Psoas muscle (tissue), 8 donors: ENCODE measurements at regions of chr1 and their contacts with region 1.

Region 1: DNA sequence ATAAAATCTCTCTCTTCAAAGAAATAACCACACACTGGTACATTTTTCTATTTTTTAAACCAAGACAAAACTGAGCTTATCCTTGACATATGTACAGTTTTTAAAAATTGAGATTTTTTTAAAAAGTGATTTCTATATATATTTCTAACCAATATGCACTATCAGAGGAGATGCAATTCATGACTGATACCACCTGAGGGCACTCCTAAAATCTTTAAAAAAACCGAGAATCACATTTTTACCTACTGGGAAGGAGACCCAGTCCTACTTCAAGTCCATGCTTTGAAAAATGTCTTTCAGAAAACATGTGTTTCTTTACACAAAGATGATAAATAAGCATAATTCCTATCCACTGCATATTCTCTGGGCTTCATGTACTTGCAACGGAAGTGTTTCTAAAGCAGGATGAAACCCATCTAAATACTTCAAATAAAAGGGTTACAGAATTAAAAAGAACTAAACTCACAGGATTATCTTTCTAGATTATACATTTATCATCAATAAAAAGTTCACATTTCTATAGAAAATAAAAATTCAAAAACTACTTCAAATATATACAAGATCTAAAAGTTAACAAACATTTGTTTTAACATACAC is 98.6 kb downstream of the ENAH start:
- DNase-seq: no peak
- ATAC-seq: peak in 2 of 4 donors; percentile 55 to 67
- H3K4me3 ChIP-seq: no peak overlapping the region
- H3K27ac ChIP-seq: no peak overlapping the region
- H3K4me1 ChIP-seq: peaks cover 11% of the 10 kb centered on the region
- H3K27me3 ChIP-seq: no peaks in the 10 kb centered on the region
- CTCF ChIP-seq: peak; percentile 62

Region 2: DNA sequence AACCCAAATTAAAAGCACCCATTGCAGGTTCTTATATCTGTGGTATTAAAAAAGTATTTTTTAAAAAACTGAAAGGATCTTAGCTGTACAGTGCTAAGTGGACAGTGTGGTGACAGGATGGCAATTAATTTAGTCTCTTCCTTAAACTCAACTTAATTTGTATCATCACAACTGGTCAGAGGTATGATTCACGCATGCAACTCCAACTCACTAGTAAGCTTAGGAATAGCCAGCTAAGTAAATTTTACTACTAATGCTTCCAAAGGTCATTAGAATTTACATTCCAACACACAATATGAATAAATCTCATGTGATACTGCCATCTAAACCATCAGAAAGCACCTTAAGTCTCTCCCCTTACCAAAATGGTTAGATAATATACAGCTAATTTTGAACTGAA is 63.2 kb after region 1 on chr1:
- intact Hi-C with region 1: no loop called
- DNase-seq: no peak
- ATAC-seq: peak in 3 of 4 donors; percentile 30 to 47 (median 45)
- H3K4me3 ChIP-seq: no peak overlapping the region
- H3K27ac ChIP-seq: no peak overlapping the region
- H3K4me1 ChIP-seq: peaks cover 24% of the 10 kb centered on the region
- H3K27me3 ChIP-seq: no peaks in the 10 kb centered on the region
- CTCF ChIP-seq: no peak

Region 3: DNA sequence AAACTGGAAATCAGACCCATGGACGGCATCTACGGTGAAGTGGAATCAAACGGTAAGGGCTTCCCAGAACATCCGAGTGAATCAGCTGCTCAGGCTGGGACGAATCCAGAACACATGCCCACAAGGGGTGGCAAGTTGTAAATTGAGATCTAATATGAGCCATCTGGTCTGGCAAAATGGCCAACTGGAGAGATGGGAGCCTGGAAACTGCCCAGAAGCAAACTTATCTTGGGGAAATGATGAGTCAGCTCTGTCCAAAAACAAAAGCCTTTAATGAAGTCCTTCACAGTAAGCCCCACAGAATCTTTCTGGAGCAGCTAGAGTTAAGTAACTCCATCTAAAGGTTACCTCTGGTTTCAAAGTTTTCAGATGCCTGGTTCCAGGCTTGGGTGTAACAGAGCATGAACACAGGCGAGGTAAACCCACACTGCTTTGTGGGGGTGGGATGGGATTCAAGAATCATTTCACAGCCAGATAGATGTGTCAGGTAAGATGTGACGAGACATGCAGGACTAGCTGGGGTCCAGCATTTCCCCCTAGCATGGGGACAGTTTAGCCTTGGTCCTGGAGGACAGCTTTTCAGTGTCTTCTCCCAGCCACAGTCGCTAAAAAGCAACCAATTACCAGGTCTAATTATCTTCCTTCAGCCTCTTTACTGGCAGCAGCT is 212.8 kb after region 1 on chr1:
- intact Hi-C with region 1: loop called (anchors 5 to 10 kb)
- DNase-seq: peak; percentile 70 to 82
- ATAC-seq: peak; percentile 92 to 94 (median 92)
- H3K4me3 ChIP-seq: peak overlapping the region; percentile 17
- H3K27ac ChIP-seq: peak overlapping the region; percentile 73
- H3K4me1 ChIP-seq: peaks cover 41% of the 10 kb centered on the region
- H3K27me3 ChIP-seq: no peaks in the 10 kb centered on the region
- CTCF ChIP-seq: no peak

Region 4: GRCh38 chr1:225772323-225772768 is 218.0 kb after region 1 on chr1:
- intact Hi-C with region 1: loop called (anchors 5 to 10 kb)
- DNase-seq: peak; percentile 80 to 89
- ATAC-seq: peak; percentile 90 to 93 (median 90)
- H3K4me3 ChIP-seq: no peak overlapping the region
- H3K27ac ChIP-seq: peak overlapping the region; percentile 5
- H3K4me1 ChIP-seq: peaks cover 31% of the 10 kb centered on the region
- H3K27me3 ChIP-seq: no peaks in the 10 kb centered on the region
- CTCF ChIP-seq: peak; percentile 87